Adrenal gland (tissue), 19 donors: ENCODE measurements at regions of chr17 and their contacts with region 1.

Region 1: GRCh38 chr17:39077866-39078265 is 73.6 kb downstream of the PLXDC1 start:
- DNase-seq: no peak
- H3K4me3 ChIP-seq: no peak overlapping the region
- H3K27ac ChIP-seq: no peak overlapping the region
- H3K4me1 ChIP-seq: peaks cover 5 to 9% of the 10 kb centered on the region in 2 donors
- H3K27me3 ChIP-seq: no peaks in the 10 kb centered on the region
- CTCF ChIP-seq: no peak
- POLR2A ChIP-seq: no peak

Region 2: DNA sequence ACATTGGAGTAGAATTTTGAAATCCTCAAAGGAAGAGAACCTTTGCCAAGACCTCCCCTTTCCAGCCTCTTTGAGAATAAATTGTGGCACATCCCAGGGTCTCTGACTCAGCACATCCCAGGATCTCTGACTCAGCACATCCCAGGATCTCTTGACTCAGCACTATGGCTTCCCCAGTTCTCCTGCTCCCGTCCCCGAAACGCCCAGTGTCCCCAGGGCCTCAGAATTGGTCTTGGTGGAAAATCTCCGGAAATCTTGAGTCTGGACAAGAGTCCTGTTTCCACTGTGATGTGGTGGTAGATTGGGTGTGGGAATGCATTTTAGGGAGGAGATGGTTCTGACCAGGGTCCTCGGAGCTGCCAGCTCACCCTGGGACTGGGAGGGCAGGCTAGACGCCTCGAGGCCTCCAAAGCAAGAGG is 54.3 kb after region 1 on chr17:
- intact Hi-C with region 1: loop called in 1 of 2 experiments (anchors 10 kb)
- DNase-seq: peak in 6 of 7 donors; percentile 44 to 67 (median 60)
- H3K4me3 ChIP-seq: no peak overlapping the region
- H3K27ac ChIP-seq: no peak overlapping the region
- H3K4me1 ChIP-seq: no peaks in the 10 kb centered on the region
- H3K27me3 ChIP-seq: no peaks in the 10 kb centered on the region
- CTCF ChIP-seq: no peak
- POLR2A ChIP-seq: no peak